WTC11 (cell line): ENCODE measurements at regions of chr16 and their contacts with region 1.

Region 1: GRCh38 chr16:67393035-67393787 is at the start of gene TPPP3:
- DNase-seq: peak; percentile 90
- ATAC-seq: peak; percentile 56
- H3K4me3 Mint-ChIP-seq: peak within 1 kb of the TSS; percentile 66
- H3K27ac Mint-ChIP-seq: no peak within 1 kb of the TSS
- H3K4me1 Mint-ChIP-seq: peaks cover 20% of the 10 kb centered on the region
- H3K27me3 Mint-ChIP-seq: peaks cover 56% of the 10 kb centered on the region
- CTCF ChIP-seq: peak; percentile 25; the same call in 1 of the 2 replicates
- total RNA-seq, gene TPPP3: 0.57 to 0.74 TPM (median 0.64 TPM) in 3 replicates

Region 2: GRCh38 chr16:67260426-67261075 is 132.7 kb before region 1 on chr16:
- CTCF ChIA-PET with region 1: interaction called, 10 read pairs
- POLR2A ChIA-PET with region 1: no interaction called
- DNase-seq: no peak
- ATAC-seq: peak; percentile 67
- H3K4me3 Mint-ChIP-seq: no peak overlapping the region
- H3K27ac Mint-ChIP-seq: no peak overlapping the region
- H3K4me1 Mint-ChIP-seq: peaks cover 4% of the 10 kb centered on the region; the same call in 1 of the 2 replicates
- H3K27me3 Mint-ChIP-seq: no peaks in the 10 kb centered on the region
- CTCF ChIP-seq: no peak

Region 3: GRCh38 chr16:67378642-67379041 is 14.6 kb before region 1 on chr16:
- CTCF ChIA-PET with region 1: interaction called, 27 read pairs
- POLR2A ChIA-PET with region 1: no interaction called
- DNase-seq: no peak
- ATAC-seq: no peak
- H3K4me3 Mint-ChIP-seq: no peak overlapping the region
- H3K27ac Mint-ChIP-seq: no peak overlapping the region
- H3K4me1 Mint-ChIP-seq: no peaks in the 10 kb centered on the region; the same call in 1 of the 2 replicates
- H3K27me3 Mint-ChIP-seq: peaks cover 16% of the 10 kb centered on the region
- CTCF ChIP-seq: no peak

Region 4: DNA sequence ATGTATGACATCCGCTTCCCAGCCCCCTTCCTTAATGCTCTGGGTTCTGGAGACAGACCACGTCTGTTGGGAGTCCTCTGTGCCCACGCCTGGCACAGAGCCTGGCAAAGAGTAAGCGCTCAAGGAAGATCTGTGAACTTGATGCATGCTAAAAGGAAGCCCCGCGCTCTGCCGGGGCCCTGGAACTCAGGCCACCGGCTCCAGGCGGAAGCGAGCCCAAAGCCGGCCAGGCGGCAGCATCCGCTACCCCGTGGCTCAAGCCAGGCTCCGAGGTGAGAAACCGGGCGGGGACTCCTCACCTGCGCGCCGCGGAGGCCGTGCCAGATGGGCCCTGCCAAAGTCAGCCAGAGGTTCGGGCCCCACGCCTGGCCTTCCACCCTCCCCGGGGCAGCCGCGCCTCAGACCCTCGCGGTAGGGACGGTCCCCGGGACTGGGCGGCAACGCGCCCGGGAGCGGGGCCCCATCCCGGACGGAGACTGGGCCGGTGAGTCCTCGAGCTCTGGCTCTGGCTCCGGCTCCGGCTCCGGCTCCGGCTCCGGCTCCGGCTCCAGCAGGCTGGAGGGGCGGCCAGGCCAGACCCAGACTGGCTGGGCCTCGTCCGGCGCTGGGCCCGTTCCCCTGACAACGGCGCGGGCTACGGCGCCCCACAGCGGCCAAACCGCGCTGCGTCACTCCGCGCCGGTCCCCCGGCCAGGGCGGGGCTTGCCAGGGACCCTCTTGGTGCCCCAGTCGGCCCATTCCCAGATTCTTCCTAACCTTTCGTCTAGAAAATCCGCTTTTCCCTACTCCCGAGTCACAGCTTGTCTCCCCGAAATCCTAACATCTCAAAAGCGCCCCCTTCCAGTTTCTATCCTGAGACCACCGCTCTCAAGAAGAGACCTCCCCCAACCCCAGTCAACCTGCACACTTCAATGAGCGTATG is 22.9 kb after region 1 on chr16 and contains the start of gene ZDHHC1:
- CTCF ChIA-PET with region 1: interaction called, 103 read pairs
- POLR2A ChIA-PET with region 1: no interaction called
- DNase-seq: peak; percentile 83
- ATAC-seq: peak; percentile 89
- H3K4me3 Mint-ChIP-seq: peak within 1 kb of the TSS; percentile 73
- H3K27ac Mint-ChIP-seq: peak within 1 kb of the TSS; percentile 77
- H3K4me1 Mint-ChIP-seq: peaks cover 33% of the 10 kb centered on the region
- H3K27me3 Mint-ChIP-seq: peaks cover 20% of the 10 kb centered on the region
- CTCF ChIP-seq: no peak
- total RNA-seq, gene ZDHHC1: 4.2 to 4.9 TPM (median 4.6 TPM) in 3 replicates

Region 5: DNA sequence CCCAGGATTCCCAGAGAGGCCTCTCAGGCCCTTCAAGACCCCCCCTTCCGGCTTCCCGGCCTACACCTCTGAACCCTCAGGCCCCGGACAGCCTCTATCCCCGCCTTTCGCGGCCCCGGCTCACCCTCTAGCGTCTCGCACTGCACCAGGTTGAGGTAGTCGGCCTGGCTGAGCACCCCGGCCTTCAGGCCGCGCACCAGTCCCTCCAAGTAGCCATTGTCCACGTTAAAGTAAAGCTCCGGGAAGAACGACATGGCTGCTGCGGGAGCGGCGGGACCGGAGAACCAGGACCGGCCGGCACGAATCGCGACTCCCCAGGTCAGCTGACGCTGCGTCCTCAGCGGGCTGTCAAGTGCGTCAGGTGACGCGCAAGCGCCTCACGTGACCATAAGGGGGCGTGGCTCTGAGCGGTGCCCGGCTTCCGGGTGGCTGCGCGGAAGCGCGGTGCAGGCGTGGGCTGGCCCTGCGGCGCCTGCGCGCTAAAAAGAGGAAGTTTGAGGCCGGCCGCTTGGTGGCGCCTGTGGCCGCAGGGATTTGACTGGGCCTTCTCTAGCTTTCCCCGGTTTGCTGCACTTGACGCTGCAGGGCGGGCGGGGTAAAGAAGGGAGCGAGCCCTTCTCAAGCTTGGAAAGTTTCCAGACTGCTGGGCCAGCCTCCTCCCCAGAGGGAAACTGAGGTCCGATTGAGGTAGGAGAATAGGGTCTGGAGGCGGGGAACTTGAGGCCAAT is 87.8 kb after region 1 on chr16 and contains the start of gene ATP6V0D1:
- CTCF ChIA-PET with region 1: interaction called, 15 read pairs
- POLR2A ChIA-PET with region 1: no interaction called
- DNase-seq: peak; percentile 99
- ATAC-seq: peak; percentile 95
- H3K4me3 Mint-ChIP-seq: peak within 1 kb of the TSS; percentile 98
- H3K27ac Mint-ChIP-seq: peak within 1 kb of the TSS; percentile 97
- H3K4me1 Mint-ChIP-seq: peaks cover 5% of the 10 kb centered on the region
- H3K27me3 Mint-ChIP-seq: peaks cover 36% of the 10 kb centered on the region
- CTCF ChIP-seq: peak; percentile 49; the same call in 1 of the 2 replicates
- total RNA-seq, gene ATP6V0D1: 32.5 to 44.1 TPM (median 33.8 TPM) in 3 replicates